Transverse colon (tissue), 4 donors: ENCODE measurements at regions of chr12 and their contacts with region 1.

Region 1: DNA sequence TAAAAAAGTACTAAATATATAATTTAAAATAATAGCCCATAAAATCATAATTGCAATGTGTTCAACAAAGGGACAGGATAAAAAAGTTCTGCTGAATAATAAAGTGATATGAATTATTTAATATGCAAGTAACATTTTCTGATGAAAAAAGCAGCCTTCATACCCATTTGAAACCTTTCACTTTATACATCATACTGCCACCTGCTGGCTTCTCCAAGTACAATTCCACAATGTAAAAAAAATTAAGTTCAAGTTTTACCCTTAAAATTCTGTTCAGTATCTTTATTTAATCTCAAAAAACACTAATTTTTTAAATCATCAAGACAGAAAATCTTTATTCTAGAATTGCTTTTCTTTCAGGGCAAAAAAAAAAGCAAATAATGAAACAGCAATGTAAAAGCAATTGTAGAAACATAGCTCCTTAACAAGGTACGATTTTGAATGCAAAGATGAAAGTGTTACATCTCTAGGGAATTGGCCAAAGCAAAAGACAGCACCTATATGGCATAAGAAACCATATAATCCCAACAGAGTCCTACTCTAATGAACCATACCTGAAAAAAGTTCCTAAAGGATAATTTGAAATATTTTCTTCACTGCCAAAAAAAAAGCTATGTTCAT is 15.0 kb downstream of the MDM1 start:
- DNase-seq: peak; percentile 17
- H3K4me3 ChIP-seq: no peak overlapping the region
- H3K27ac ChIP-seq: peak overlapping the region in 1 of 4 donors; percentile 7
- H3K4me1 ChIP-seq: peaks cover 0 to 6% (median 0%) of the 10 kb centered on the region in 4 donors
- H3K27me3 ChIP-seq: no peaks in the 10 kb centered on the region
- CTCF ChIP-seq: peak; percentile 64 to 77 (median 69)
- EP300 ChIP-seq: no peak
- POLR2A ChIP-seq: no peak

Region 2: DNA sequence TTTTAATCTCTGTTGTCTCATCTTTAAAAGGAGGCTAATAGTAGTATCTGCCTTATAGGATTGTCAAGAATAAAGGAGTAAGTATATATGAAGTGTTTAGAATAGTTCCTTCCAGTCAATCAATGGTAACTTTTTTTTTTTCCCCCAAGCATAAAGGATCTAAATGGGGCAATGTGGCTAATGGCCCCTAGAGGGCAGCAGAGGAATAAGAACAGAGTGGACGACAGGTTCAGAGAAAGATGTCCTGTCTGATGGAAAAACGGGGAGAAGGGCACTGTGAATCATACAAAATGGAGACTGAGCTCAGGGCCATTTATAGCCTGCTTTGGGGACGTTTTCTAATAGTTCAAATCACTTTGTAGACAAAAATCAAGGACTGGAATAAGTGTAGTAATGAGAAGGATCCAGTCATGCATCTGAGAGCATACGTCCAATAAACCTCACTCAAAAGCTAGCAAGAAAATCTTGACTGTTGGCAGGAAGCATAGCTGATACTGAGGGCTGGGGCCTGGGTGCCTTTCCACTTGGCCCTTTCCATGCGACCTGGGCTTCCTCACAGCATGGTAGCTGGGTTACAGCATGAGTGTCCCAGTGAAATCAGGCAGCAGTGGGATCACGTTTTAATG is 276.6 kb before region 1 on chr12:
- in situ Hi-C with region 1: loop called in 2 of 4 experiments (anchors 25 kb)
- intact Hi-C with region 1: no loop called
- DNase-seq: peak; percentile 63
- H3K4me3 ChIP-seq: no peak overlapping the region
- H3K27ac ChIP-seq: no peak overlapping the region
- H3K4me1 ChIP-seq: no peaks in the 10 kb centered on the region
- H3K27me3 ChIP-seq: no peaks in the 10 kb centered on the region
- CTCF ChIP-seq: peak; percentile 66 to 87 (median 82)
- EP300 ChIP-seq: no peak
- POLR2A ChIP-seq: no peak

Region 3: DNA sequence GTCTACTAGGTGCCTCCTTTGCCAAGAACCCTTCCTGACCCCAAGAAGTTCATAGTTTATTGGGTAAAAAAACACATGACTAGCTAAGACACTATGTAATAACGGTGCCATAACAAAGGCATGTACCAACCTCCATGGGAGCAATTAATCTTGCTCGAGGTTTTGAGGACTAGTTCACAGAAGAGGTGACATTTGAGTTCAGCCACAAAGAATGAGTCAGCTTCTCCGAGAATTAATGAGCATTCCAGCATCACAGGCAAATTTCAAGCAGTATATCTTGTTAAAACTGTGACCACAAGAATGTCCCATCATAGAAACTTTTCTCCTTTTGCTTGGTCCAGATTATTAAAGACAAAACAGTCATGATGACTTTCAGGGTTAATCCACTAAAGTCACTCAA is 180.5 kb after region 1 on chr12:
- in situ Hi-C with region 1: no loop called
- intact Hi-C with region 1: no loop called
- DNase-seq: no peak
- H3K4me3 ChIP-seq: no peak overlapping the region
- H3K27ac ChIP-seq: peak overlapping the region in 1 of 4 donors; percentile 18
- H3K4me1 ChIP-seq: no peaks in the 10 kb centered on the region
- H3K27me3 ChIP-seq: no peaks in the 10 kb centered on the region
- CTCF ChIP-seq: no peak
- EP300 ChIP-seq: no peak
- POLR2A ChIP-seq: no peak